ENCODE measurements at regions of chrX and their contacts with region 1.

Region 1: GRCh38 chrX:40108959-40109287 is 11.2 kb upstream of the BCOR start:
- DNase-seq: peak; percentile 73
- H3K4me3 ChIP-seq: peak overlapping the region; percentile 13 to 38 (median 36)
- H3K27ac ChIP-seq: peak overlapping the region; percentile 70
- H3K4me1 ChIP-seq: peaks cover 13% of the 10 kb centered on the region
- H3K27me3 ChIP-seq: no peaks in the 10 kb centered on the region
- CTCF ChIP-seq: no peak
- POLR2A ChIP-seq: no peak

Region 2: DNA sequence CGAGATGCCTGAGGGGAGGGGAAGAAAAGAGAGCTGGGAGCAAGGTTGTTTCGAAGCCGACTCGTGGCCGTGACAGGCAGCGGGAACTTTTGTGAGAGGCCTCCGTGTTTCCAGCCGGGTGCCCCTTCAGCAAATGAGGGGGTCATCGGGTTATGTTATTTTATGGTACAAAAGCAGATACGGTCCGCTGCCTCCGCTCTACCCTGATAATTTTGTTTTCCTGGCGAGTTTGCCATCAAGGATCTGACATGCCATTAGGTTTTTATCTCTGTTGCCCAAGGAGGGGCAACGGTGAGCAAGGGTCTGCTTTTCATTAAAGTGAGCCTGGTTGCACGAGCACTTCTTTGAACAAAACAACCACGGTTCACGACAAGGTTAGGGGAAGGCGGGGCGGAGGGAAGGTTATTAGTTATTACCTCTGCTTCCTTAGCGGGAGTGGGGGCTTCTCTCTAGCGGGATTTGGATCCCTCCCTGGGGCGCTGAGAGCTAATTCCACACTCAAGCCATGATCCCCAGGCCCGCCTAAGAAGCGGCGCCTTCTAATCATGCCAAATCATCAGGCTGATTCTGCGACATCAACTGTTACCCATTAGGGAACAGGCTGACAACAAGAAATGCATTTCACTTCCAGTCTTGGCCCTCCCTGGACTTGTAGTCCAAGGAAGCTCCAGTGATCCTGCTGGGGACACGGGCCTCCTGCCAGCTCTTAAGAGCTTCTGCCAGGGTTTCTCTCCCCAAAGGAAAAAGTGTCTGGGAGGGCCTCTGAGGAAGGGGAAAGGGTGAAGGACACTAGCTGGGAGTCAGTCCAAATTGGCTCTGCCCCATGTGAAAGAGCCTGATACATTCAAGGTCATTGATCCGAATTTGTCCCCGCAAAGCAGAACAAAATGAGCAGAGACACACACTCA is 689.9 kb before region 1 on chrX:
- CTCF ChIA-PET with region 1: no interaction called
- POLR2A ChIA-PET with region 1: no interaction called
- dilution Hi-C with region 1: no loop called
- intact Hi-C with region 1: no loop called
- DNase-seq: peak; percentile 73
- H3K4me3 ChIP-seq: no peak overlapping the region
- H3K27ac ChIP-seq: peak overlapping the region; percentile 91
- H3K4me1 ChIP-seq: peaks cover 25% of the 10 kb centered on the region
- H3K27me3 ChIP-seq: no peaks in the 10 kb centered on the region
- CTCF ChIP-seq: no peak
- POLR2A ChIP-seq: no peak

Region 3: DNA sequence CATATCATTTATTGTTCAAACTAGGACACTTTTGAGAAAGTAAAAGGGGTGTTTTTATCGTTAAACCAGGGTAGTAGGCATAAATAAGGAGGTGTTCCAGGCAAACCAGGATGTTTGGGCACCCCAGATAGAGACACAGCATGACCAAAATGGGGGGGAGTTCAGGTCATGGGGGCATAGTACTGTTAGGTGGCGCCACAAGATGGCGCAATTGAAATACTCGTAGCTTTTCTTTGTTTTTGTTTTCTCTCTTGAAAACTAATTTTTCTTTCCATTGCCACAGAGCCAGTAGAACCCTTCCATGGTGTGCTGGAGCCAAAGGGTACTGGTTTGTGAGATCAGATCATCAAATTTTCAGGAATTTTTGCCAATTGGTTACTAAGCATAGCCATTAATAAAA is 294.5 kb before region 1 on chrX:
- CTCF ChIA-PET with region 1: no interaction called
- POLR2A ChIA-PET with region 1: no interaction called
- dilution Hi-C with region 1: no loop called
- intact Hi-C with region 1: loop called (anchors 5 kb)
- DNase-seq: peak; percentile 20
- H3K4me3 ChIP-seq: no peak overlapping the region
- H3K27ac ChIP-seq: no peak overlapping the region
- H3K4me1 ChIP-seq: peaks cover 16% of the 10 kb centered on the region
- H3K27me3 ChIP-seq: no peaks in the 10 kb centered on the region
- CTCF ChIP-seq: peak; percentile 27 to 31
- POLR2A ChIP-seq: no peak

Region 4: GRCh38 chrX:40097497-40098263 is 11.2 kb before region 1 on chrX and contains the start of gene BCOR:
- CTCF ChIA-PET with region 1: interaction called, 5 read pairs
- POLR2A ChIA-PET with region 1: interaction called, 4 read pairs
- dilution Hi-C with region 1: no loop called
- intact Hi-C with region 1: loop called (anchors 1 kb)
- DNase-seq: peak; percentile 51
- H3K4me3 ChIP-seq: peak within 1 kb of the TSS; percentile 55 to 72 (median 59)
- H3K27ac ChIP-seq: peak within 1 kb of the TSS; percentile 41
- H3K4me1 ChIP-seq: peaks cover 12% of the 10 kb centered on the region
- H3K27me3 ChIP-seq: no peaks in the 10 kb centered on the region
- CTCF ChIP-seq: no peak
- POLR2A ChIP-seq: peak; percentile 74
- total RNA-seq, gene BCOR: 23.9 and 24.2 TPM in 2 replicates

Region 5: DNA sequence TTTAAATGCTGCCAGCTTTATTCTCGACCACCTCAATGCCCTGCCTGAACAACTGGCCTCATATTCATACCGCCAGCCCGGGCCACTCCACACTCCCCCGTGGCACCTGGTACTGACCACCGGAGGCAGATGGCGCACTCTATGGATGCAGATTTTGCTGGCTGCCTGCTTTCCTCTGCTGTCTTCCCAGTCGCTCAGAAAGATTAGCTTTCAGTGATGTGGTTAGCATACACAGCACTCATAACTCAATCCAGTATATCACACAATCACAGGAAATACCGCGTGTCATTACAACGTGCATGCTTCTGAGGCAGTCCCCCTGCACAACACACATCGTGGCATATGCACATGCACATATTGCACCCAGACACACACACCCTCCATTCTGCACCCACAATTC is 136.1 kb after region 1 on chrX:
- CTCF ChIA-PET with region 1: no interaction called
- POLR2A ChIA-PET with region 1: no interaction called
- dilution Hi-C with region 1: no loop called
- intact Hi-C with region 1: loop called (anchors 5 kb)
- DNase-seq: peak; percentile 77
- H3K4me3 ChIP-seq: no peak overlapping the region
- H3K27ac ChIP-seq: no peak overlapping the region
- H3K4me1 ChIP-seq: peaks cover 3% of the 10 kb centered on the region
- H3K27me3 ChIP-seq: no peaks in the 10 kb centered on the region
- CTCF ChIP-seq: no peak
- POLR2A ChIP-seq: no peak